Activated CD4-positive, alpha-beta T cell treated with anti-CD3 and anti-CD28 coated beads for 36 hours (primary cell): ENCODE measurements at regions of chr1 and their contacts with region 1.

Region 1: GRCh38 chr1:27772933-27773825 is at the start of gene STX12:
- DNase-seq: peak; percentile 100
- ATAC-seq: peak; percentile 97
- H3K4me3 Mint-ChIP-seq: peak within 1 kb of the TSS; percentile 98
- H3K27ac Mint-ChIP-seq: peak within 1 kb of the TSS; percentile 99
- H3K4me1 Mint-ChIP-seq: peaks cover 31% of the 10 kb centered on the region
- H3K27me3 Mint-ChIP-seq: no peaks in the 10 kb centered on the region
- total RNA-seq, gene STX12: 26.8 to 37.4 TPM

Region 2: GRCh38 chr1:27321813-27322577 is 451.2 kb before region 1 on chr1 and contains the start of gene TMEM222:
- CTCF ChIA-PET with region 1: no interaction called
- POLR2A ChIA-PET with region 1: no interaction called
- intact Hi-C with region 1: loop called in 1 of 2 experiments (anchors 1 kb)
- DNase-seq: peak; percentile 99
- ATAC-seq: peak; percentile 98
- H3K4me3 Mint-ChIP-seq: peak within 1 kb of the TSS; percentile 94
- H3K27ac Mint-ChIP-seq: peak within 1 kb of the TSS; percentile 90
- H3K4me1 Mint-ChIP-seq: peaks cover 41% of the 10 kb centered on the region
- H3K27me3 Mint-ChIP-seq: no peaks in the 10 kb centered on the region
- total RNA-seq, gene TMEM222: 27.5 to 31.2 TPM

Region 3: GRCh38 chr1:27725374-27726173 is 47.6 kb before region 1 on chr1 and contains the start of gene FAM76A:
- CTCF ChIA-PET with region 1: interaction called, 12 read pairs
- POLR2A ChIA-PET with region 1: interaction called, 22 read pairs
- intact Hi-C with region 1: loop called (anchors 1 kb)
- DNase-seq: peak; percentile 100
- ATAC-seq: peak; percentile 95
- H3K4me3 Mint-ChIP-seq: peak within 1 kb of the TSS; percentile 78
- H3K27ac Mint-ChIP-seq: peak within 1 kb of the TSS; percentile 93
- H3K4me1 Mint-ChIP-seq: peaks cover 15% of the 10 kb centered on the region
- H3K27me3 Mint-ChIP-seq: no peaks in the 10 kb centered on the region
- total RNA-seq, gene FAM76A: 7.4 to 8.1 TPM

Region 4: GRCh38 chr1:27872059-27872801 is 99.1 kb after region 1 on chr1 and contains the start of gene THEMIS2:
- CTCF ChIA-PET with region 1: no interaction called
- POLR2A ChIA-PET with region 1: no interaction called
- intact Hi-C with region 1: loop called in 1 of 2 experiments (anchors 1 kb)
- DNase-seq: peak; percentile 90
- ATAC-seq: peak; percentile 81
- H3K4me3 Mint-ChIP-seq: peak within 1 kb of the TSS; percentile 87
- H3K27ac Mint-ChIP-seq: peak within 1 kb of the TSS; percentile 83
- H3K4me1 Mint-ChIP-seq: peaks cover 36% of the 10 kb centered on the region
- H3K27me3 Mint-ChIP-seq: no peaks in the 10 kb centered on the region
- total RNA-seq, gene THEMIS2: 14.2 to 16.2 TPM

Region 5: DNA sequence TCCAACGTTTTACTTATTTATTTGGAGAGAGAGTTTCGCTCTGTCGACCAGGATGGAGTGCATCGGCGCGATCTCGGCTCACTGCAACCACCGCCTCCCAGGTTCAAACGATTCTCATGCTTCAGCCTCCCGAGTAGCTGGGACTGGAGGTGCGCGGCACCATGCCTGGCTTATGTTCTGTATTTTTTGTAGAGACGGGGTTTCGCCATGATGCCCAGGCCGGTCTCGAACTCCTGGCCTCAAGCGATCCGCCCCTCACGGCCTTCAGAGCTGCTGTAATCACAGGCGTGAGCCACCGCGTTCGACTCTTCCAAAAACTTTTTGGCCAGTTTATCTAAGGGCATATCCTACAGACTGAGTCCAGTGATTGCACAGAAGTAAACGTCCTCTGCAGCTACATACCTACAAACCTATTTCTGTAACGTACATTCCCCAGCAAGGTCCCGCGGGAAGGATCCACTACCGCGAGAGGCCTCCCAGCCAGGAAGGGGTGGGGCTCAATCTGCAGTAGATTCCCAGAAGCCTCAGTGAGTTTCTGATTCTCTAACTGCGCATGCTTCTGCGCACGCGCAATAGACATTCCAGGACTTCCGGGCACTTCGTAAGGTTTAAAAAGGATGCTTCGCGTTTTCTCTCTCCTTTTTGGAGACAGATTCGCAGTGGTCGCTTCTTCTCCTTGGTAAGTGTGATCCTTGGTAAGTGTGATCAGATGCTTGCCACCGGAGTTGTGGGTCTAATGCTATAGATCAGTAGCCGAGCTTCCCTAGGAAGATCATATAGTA is 732.4 kb after region 1 on chr1 and contains the start of gene RCC1:
- CTCF ChIA-PET with region 1: no interaction called
- POLR2A ChIA-PET with region 1: no interaction called
- intact Hi-C with region 1: loop called in 1 of 2 experiments (anchors 1 kb)
- DNase-seq: peak; percentile 97
- ATAC-seq: peak; percentile 85
- H3K4me3 Mint-ChIP-seq: peak within 1 kb of the TSS; percentile 98
- H3K27ac Mint-ChIP-seq: peak within 1 kb of the TSS; percentile 99
- H3K4me1 Mint-ChIP-seq: peaks cover 26% of the 10 kb centered on the region
- H3K27me3 Mint-ChIP-seq: peaks cover 1% of the 10 kb centered on the region
- total RNA-seq, gene RCC1: 103 to 107 TPM

Region 6: GRCh38 chr1:28736450-28737306 is 963.5 kb after region 1 on chr1 and contains the start of gene YTHDF2:
- CTCF ChIA-PET with region 1: no interaction called
- POLR2A ChIA-PET with region 1: interaction called, 3 read pairs
- intact Hi-C with region 1: loop called in 1 of 2 experiments (anchors 2 kb)
- DNase-seq: peak; percentile 99
- ATAC-seq: peak; percentile 90
- H3K4me3 Mint-ChIP-seq: peak within 1 kb of the TSS; percentile 95
- H3K27ac Mint-ChIP-seq: peak within 1 kb of the TSS; percentile 90
- H3K4me1 Mint-ChIP-seq: peaks cover 31% of the 10 kb centered on the region
- H3K27me3 Mint-ChIP-seq: no peaks in the 10 kb centered on the region
- total RNA-seq, gene YTHDF2: 74.8 to 98.7 TPM